Activated CD4-positive, alpha-beta T cell treated with anti-CD3 and anti-CD28 coated beads, Interleukin-2, amount 10 ng/mL, durations not matched to agents 7 days and 5 days (primary cell): ENCODE measurements at regions of chr11 and their contacts with region 1.

Region 1: GRCh38 chr11:128630367-128631230 is 43.2 kb upstream of the ETS1 start:
- DNase-seq: peak; percentile 94
- H3K4me3 Mint-ChIP-seq: peak overlapping the region; percentile 24
- H3K27ac Mint-ChIP-seq: peak overlapping the region; percentile 71
- H3K4me1 Mint-ChIP-seq: peaks cover 71% of the 10 kb centered on the region
- H3K27me3 Mint-ChIP-seq: no peaks in the 10 kb centered on the region

Region 2: GRCh38 chr11:128172046-128172878 is 458.3 kb before region 1 on chr11:
- CTCF ChIA-PET with region 1: interaction called, 48 read pairs
- POLR2A ChIA-PET with region 1: no interaction called
- DNase-seq: peak; percentile 89
- H3K4me3 Mint-ChIP-seq: no peak overlapping the region
- H3K27ac Mint-ChIP-seq: no peak overlapping the region
- H3K4me1 Mint-ChIP-seq: peaks cover 6% of the 10 kb centered on the region
- H3K27me3 Mint-ChIP-seq: peaks cover 12% of the 10 kb centered on the region

Region 3: GRCh38 chr11:128302425-128303186 is 328.0 kb before region 1 on chr11:
- CTCF ChIA-PET with region 1: interaction called, 21 read pairs
- POLR2A ChIA-PET with region 1: no interaction called
- DNase-seq: peak; percentile 92
- H3K4me3 Mint-ChIP-seq: peak overlapping the region; percentile 82
- H3K27ac Mint-ChIP-seq: peak overlapping the region; percentile 91
- H3K4me1 Mint-ChIP-seq: peaks cover 75% of the 10 kb centered on the region
- H3K27me3 Mint-ChIP-seq: no peaks in the 10 kb centered on the region

Region 4: GRCh38 chr11:128508770-128509510 is 121.7 kb before region 1 on chr11:
- CTCF ChIA-PET with region 1: interaction called, 26 read pairs
- POLR2A ChIA-PET with region 1: interaction called, 3 read pairs
- DNase-seq: no peak
- H3K4me3 Mint-ChIP-seq: peak overlapping the region; percentile 71
- H3K27ac Mint-ChIP-seq: peak overlapping the region; percentile 89
- H3K4me1 Mint-ChIP-seq: peaks cover 97% of the 10 kb centered on the region
- H3K27me3 Mint-ChIP-seq: no peaks in the 10 kb centered on the region

Region 5: GRCh38 chr11:128610721-128611617 is 19.6 kb before region 1 on chr11:
- CTCF ChIA-PET with region 1: interaction called, 24 read pairs
- POLR2A ChIA-PET with region 1: no interaction called
- DNase-seq: peak; percentile 65
- H3K4me3 Mint-ChIP-seq: peak overlapping the region; percentile 42
- H3K27ac Mint-ChIP-seq: peak overlapping the region; percentile 85
- H3K4me1 Mint-ChIP-seq: peaks cover 44% of the 10 kb centered on the region
- H3K27me3 Mint-ChIP-seq: no peaks in the 10 kb centered on the region

Region 6: GRCh38 chr11:128686745-128687177 is 56.2 kb after region 1 on chr11:
- CTCF ChIA-PET with region 1: no interaction called
- POLR2A ChIA-PET with region 1: no interaction called
- DNase-seq: peak; percentile 59
- H3K4me3 Mint-ChIP-seq: peak overlapping the region; percentile 61
- H3K27ac Mint-ChIP-seq: no peak overlapping the region
- H3K4me1 Mint-ChIP-seq: peaks cover 46% of the 10 kb centered on the region
- H3K27me3 Mint-ChIP-seq: peaks cover 78% of the 10 kb centered on the region